Motor neuron (in vitro differentiated cells): ENCODE measurements at regions of chr2 and their contacts with region 1.

Region 1: GRCh38 chr2:28958689-28959088 is 22.4 kb upstream of the TOGARAM2 start:
- ATAC-seq: peak; percentile 78 to 99 (median 90)
- H3K4me3 ChIP-seq: no peak overlapping the region
- H3K27ac ChIP-seq: no peak overlapping the region
- H3K4me1 ChIP-seq: peaks cover 0 to 6% of the 10 kb centered on the region in 2 donors

Region 2: GRCh38 chr2:27559228-27559627 is 1399.5 kb before region 1 on chr2:
- in situ Hi-C with region 1: no loop called
- ATAC-seq: no peak
- H3K4me3 ChIP-seq: no peak overlapping the region
- H3K27ac ChIP-seq: no peak overlapping the region
- H3K4me1 ChIP-seq: no peaks in the 10 kb centered on the region

Region 3: GRCh38 chr2:29053670-29054400 is 95.1 kb after region 1 on chr2:
- in situ Hi-C with region 1: no loop called
- ATAC-seq: peak in 2 of 8 experiments; percentile 92 to 94
- H3K4me3 ChIP-seq: no peak overlapping the region
- H3K27ac ChIP-seq: no peak overlapping the region
- H3K4me1 ChIP-seq: peaks cover 7 to 16% of the 10 kb centered on the region in 2 donors

Region 4: DNA sequence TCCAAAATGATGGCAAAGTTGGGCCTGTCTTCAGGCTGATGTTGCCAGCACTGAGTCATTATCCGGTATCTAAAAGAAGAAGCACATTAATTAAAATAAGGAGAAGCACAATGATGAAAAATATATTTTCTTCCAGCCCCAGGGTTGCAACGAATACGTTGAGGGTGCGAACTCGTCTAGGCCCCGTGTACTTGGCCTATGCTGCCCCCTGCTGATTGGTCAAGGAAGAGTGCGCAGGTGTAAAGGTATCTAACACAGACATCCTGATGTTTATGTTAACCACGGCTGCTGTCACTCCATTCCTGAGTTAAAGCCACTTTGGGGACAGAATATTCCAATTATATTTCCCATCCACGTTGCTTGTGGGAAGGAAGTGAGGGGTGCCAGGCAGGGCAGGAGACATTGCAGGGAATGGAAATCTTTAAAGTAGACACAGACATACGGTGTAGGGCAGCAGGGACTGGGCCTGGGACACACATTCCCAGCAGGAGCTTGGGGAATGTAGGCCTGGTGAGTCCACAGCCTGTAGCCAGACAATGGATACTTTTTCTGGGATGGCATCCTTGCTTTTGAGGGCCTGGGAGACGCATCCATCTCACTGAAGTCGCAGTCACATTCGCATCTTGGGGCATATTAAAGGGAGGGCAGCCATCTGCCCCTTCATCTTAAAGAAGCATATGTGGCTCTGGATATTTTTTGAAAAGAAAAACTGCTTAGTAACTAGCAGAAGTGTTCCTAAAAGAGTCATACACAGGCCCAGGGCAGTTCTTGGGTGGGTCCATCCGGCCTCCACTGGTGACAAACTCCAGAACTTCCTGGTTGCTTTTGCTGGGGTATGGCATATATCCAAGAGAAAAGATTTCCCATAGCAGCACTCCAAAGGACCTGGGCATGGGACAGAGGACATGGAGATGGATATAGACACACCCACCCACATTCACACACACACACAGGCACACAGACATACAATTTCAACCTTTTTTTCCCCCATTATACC is 238.4 kb after region 1 on chr2:
- in situ Hi-C with region 1: loop called in 7 of 9 experiments (anchors 10 to 25 kb)
- ATAC-seq: peak; percentile 78 to 99 (median 87)
- H3K4me3 ChIP-seq: no peak overlapping the region
- H3K27ac ChIP-seq: no peak overlapping the region
- H3K4me1 ChIP-seq: peaks cover 0 to 2% of the 10 kb centered on the region in 2 donors

Region 5: GRCh38 chr2:29206941-29207340 is 248.3 kb after region 1 on chr2:
- in situ Hi-C with region 1: loop called in 2 of 9 experiments (anchors 10 kb)
- ATAC-seq: no peak
- H3K4me3 ChIP-seq: no peak overlapping the region
- H3K27ac ChIP-seq: no peak overlapping the region
- H3K4me1 ChIP-seq: peaks cover 4 to 8% of the 10 kb centered on the region in 2 donors

Region 6: GRCh38 chr2:30072250-30072842 is 1113.7 kb after region 1 on chr2:
- in situ Hi-C with region 1: loop called in 4 of 9 experiments (anchors 25 kb)
- ATAC-seq: peak; percentile 90 to 100 (median 98)
- H3K4me3 ChIP-seq: no peak overlapping the region
- H3K27ac ChIP-seq: no peak overlapping the region
- H3K4me1 ChIP-seq: no peaks in the 10 kb centered on the region

Region 7: GRCh38 chr2:30078521-30078920 is 1119.8 kb after region 1 on chr2:
- in situ Hi-C with region 1: loop called in 4 of 9 experiments (anchors 25 kb)
- ATAC-seq: no peak
- H3K4me3 ChIP-seq: no peak overlapping the region
- H3K27ac ChIP-seq: no peak overlapping the region
- H3K4me1 ChIP-seq: no peaks in the 10 kb centered on the region